ENCODE measurements at regions of chr10 and their contacts with region 1.

Region 1: GRCh38 chr10:70115948-70116682 is 16.5 kb downstream of the AIFM2 start:
- DNase-seq: peak; percentile 25 to 76 (median 63)
- ATAC-seq: peak; percentile 89
- H3K4me3 ChIP-seq: no peak overlapping the region
- H3K4me3 Mint-ChIP-seq: no peak overlapping the region
- H3K27ac ChIP-seq: no peak overlapping the region
- H3K27ac Mint-ChIP-seq: no peak overlapping the region
- H3K4me1 ChIP-seq: peaks cover 9% of the 10 kb centered on the region
- H3K4me1 Mint-ChIP-seq: peaks cover 7% of the 10 kb centered on the region
- H3K27me3 ChIP-seq: no peaks in the 10 kb centered on the region
- H3K27me3 Mint-ChIP-seq: no peaks in the 10 kb centered on the region
- CTCF ChIP-seq: peak; percentile 93

Region 2: GRCh38 chr10:70034232-70034631 is 81.9 kb before region 1 on chr10:
- CTCF ChIA-PET with region 1: no interaction called
- POLR2A ChIA-PET with region 1: no interaction called
- intact Hi-C with region 1: no loop called
- DNase-seq: no peak
- ATAC-seq: no peak
- H3K4me3 ChIP-seq: no peak overlapping the region
- H3K4me3 Mint-ChIP-seq: no peak overlapping the region
- H3K27ac ChIP-seq: no peak overlapping the region
- H3K27ac Mint-ChIP-seq: no peak overlapping the region
- H3K4me1 ChIP-seq: no peaks in the 10 kb centered on the region
- H3K4me1 Mint-ChIP-seq: no peaks in the 10 kb centered on the region
- H3K27me3 ChIP-seq: no peaks in the 10 kb centered on the region
- H3K27me3 Mint-ChIP-seq: peaks cover 13% of the 10 kb centered on the region
- CTCF ChIP-seq: no peak

Region 3: DNA sequence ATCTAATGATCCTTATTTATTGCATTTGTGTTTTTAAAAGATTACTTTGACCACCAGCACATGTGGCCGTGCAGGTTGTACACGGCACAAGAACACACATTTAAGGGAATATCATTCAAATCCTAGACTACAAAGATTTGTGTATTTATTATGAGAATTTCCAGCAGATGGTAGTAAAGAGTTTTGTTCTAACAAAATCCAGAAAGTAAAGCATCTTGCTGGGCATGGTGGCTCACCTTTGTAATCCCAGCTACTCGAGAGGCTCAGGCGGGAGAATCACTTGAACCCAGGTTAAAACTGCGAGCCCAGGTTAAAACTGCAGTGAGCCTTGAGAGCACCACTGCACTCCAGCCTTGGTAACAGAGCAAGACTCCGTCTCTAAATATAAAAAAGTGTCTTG is 31.9 kb before region 1 on chr10:
- CTCF ChIA-PET with region 1: interaction called, 19 read pairs
- POLR2A ChIA-PET with region 1: no interaction called
- intact Hi-C with region 1: no loop called
- DNase-seq: peak in 2 of 9 experiments; percentile 15 to 31
- ATAC-seq: no peak
- H3K4me3 ChIP-seq: no peak overlapping the region
- H3K4me3 Mint-ChIP-seq: no peak overlapping the region
- H3K27ac ChIP-seq: no peak overlapping the region
- H3K27ac Mint-ChIP-seq: no peak overlapping the region
- H3K4me1 ChIP-seq: no peaks in the 10 kb centered on the region
- H3K4me1 Mint-ChIP-seq: no peaks in the 10 kb centered on the region
- H3K27me3 ChIP-seq: no peaks in the 10 kb centered on the region
- H3K27me3 Mint-ChIP-seq: no peaks in the 10 kb centered on the region
- CTCF ChIP-seq: no peak

Region 4: DNA sequence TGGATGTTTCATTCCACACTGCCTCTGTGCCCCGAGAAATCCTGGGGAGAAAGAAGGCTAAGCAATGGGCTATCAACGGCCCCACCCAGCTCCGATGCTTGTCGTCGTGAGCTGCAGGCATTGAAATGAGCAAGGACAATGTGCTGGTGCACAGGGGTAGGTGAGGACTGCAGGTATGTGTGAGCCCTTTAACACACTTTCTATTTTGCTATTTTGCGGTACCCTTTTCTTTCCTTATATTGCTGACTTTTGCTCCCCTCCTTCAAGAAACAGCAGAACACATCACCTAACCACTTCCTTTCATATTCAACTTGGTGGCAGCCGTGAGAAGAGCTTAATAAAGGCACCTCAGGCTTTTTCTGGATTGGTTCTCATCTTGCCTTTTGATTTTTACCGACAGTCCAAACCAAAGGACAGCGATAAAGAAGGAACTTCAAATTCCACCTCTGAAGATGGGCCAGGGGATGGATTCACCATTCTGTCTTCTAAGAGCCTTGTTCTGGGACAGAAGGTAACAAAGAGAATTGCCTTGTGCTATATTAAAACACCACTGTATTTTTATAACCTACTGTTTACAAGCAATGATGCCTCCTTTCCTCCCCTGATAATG is 22.7 kb before region 1 on chr10:
- CTCF ChIA-PET with region 1: interaction called, 127 read pairs
- POLR2A ChIA-PET with region 1: interaction called, 9 read pairs
- intact Hi-C with region 1: loop called in 1 of 2 experiments (anchors 1 kb)
- DNase-seq: peak in 7 of 9 experiments; percentile 3 to 73 (median 18)
- ATAC-seq: peak; percentile 68
- H3K4me3 ChIP-seq: peak overlapping the region; percentile 54 to 70
- H3K4me3 Mint-ChIP-seq: peak overlapping the region; percentile 75
- H3K27ac ChIP-seq: peak overlapping the region; percentile 47 to 84
- H3K27ac Mint-ChIP-seq: peak overlapping the region; percentile 95
- H3K4me1 ChIP-seq: peaks cover 35% of the 10 kb centered on the region
- H3K4me1 Mint-ChIP-seq: peaks cover 62% of the 10 kb centered on the region
- H3K27me3 ChIP-seq: no peaks in the 10 kb centered on the region
- H3K27me3 Mint-ChIP-seq: no peaks in the 10 kb centered on the region
- CTCF ChIP-seq: no peak

Region 5: GRCh38 chr10:70132098-70133029 is 16.2 kb after region 1 on chr10 and contains the start of gene AIFM2:
- CTCF ChIA-PET with region 1: interaction called, 56 read pairs
- POLR2A ChIA-PET with region 1: no interaction called
- intact Hi-C with region 1: no loop called
- DNase-seq: peak in 8 of 9 experiments; percentile 17 to 73 (median 50)
- ATAC-seq: peak; percentile 94
- H3K4me3 ChIP-seq: peak within 1 kb of the TSS; percentile 75 to 82
- H3K4me3 Mint-ChIP-seq: peak within 1 kb of the TSS; percentile 92
- H3K27ac ChIP-seq: peak within 1 kb of the TSS; percentile 47 to 50
- H3K27ac Mint-ChIP-seq: peak within 1 kb of the TSS; percentile 94
- H3K4me1 ChIP-seq: peaks cover 15% of the 10 kb centered on the region
- H3K4me1 Mint-ChIP-seq: peaks cover 26% of the 10 kb centered on the region
- H3K27me3 ChIP-seq: no peaks in the 10 kb centered on the region
- H3K27me3 Mint-ChIP-seq: no peaks in the 10 kb centered on the region
- CTCF ChIP-seq: no peak
- total RNA-seq, gene AIFM2: 2.6 to 3.6 TPM

Region 6: DNA sequence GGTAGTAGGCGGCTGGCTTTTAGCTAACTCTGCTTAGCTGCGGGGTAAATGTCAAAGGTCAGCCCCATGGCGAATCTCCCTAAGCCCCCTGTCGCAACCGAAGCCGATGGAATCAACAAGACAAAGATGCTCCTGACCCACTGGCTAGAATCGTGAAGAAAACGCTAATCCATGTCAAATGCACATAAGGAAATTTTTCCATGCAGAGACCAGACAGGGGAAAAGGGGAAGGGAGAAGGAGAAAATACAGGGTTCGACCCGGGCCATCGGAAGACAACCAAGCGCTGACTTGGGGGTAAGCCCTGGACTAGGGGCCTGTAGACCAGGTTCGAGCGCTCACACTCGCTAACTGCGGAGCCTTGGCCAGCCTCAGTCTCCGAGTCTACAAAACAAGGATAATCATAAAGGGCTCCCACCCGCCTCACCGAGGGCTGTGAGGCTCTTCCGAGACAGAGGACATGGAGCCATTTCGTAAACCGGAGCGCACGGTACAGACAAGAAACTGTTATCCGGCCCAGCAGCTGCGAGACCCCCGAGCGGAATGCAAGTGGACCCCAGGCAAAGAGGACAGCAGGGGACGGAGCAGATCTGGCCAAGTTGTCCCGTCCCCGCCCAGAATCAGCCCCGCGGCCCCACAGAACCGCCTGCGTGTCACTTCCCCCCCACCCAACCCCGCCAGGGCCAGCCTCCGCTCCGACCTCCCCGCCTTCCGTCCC is 53.7 kb after region 1 on chr10:
- CTCF ChIA-PET with region 1: interaction called, 13 read pairs
- POLR2A ChIA-PET with region 1: interaction called, 3 read pairs
- intact Hi-C with region 1: no loop called
- DNase-seq: peak in 3 of 9 experiments; percentile 28 to 51 (median 29)
- ATAC-seq: peak; percentile 13
- H3K4me3 ChIP-seq: peak overlapping the region; percentile 65 to 90
- H3K4me3 Mint-ChIP-seq: peak overlapping the region; percentile 94
- H3K27ac ChIP-seq: peak overlapping the region; percentile 83 to 94
- H3K27ac Mint-ChIP-seq: peak overlapping the region; percentile 97
- H3K4me1 ChIP-seq: peaks cover 57% of the 10 kb centered on the region
- H3K4me1 Mint-ChIP-seq: peaks cover 60% of the 10 kb centered on the region
- H3K27me3 ChIP-seq: no peaks in the 10 kb centered on the region
- H3K27me3 Mint-ChIP-seq: no peaks in the 10 kb centered on the region
- CTCF ChIP-seq: no peak

Region 7: DNA sequence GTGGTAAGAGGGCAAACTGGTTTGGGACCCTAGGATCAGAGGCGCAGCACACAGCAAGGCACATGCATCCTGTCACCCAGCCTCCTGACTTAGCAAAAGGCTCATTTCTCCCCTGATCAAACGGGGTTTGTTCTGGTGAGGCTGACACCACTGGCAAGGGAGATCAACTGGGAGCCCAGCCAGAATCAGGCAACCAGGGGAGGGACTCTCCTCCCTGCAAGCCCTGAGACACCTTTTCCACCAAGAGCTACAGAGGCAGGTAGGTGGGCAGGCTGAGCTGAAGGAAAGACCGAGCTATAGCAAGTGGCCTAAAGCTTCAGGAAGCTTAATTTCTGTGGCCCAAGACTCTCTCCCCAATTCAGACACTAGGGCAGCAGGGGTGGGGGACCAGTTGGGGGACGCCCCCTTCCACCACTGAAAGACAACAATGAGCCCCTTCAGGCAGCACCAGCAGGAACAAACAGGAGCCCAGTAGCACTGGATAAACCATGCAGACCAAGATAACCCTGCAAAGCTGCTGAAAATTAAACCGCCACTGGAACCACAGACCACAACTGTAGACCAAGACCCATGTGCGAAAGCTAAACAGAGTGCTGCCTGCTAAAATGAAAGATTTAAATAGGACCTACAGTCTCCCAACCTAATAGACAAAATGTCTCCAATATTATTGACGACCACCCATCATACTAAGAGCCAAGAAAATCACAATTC is 81.3 kb after region 1 on chr10:
- CTCF ChIA-PET with region 1: interaction called, 27 read pairs
- POLR2A ChIA-PET with region 1: no interaction called
- intact Hi-C with region 1: loop called in 1 of 2 experiments (anchors 1 kb)
- DNase-seq: peak in 4 of 9 experiments; percentile 29 to 58 (median 46)
- ATAC-seq: no peak
- H3K4me3 ChIP-seq: no peak overlapping the region
- H3K4me3 Mint-ChIP-seq: peak overlapping the region; percentile 33
- H3K27ac ChIP-seq: peak overlapping the region in 1 of 2 experiments; percentile 50
- H3K27ac Mint-ChIP-seq: peak overlapping the region; percentile 72
- H3K4me1 ChIP-seq: peaks cover 15% of the 10 kb centered on the region
- H3K4me1 Mint-ChIP-seq: peaks cover 31% of the 10 kb centered on the region
- H3K27me3 ChIP-seq: no peaks in the 10 kb centered on the region
- H3K27me3 Mint-ChIP-seq: no peaks in the 10 kb centered on the region
- CTCF ChIP-seq: no peak

Measured in CD8-positive, alpha-beta T cell (primary cell).